ENCODE measurements at regions of chr17 and their contacts with region 1.

Region 1: DNA sequence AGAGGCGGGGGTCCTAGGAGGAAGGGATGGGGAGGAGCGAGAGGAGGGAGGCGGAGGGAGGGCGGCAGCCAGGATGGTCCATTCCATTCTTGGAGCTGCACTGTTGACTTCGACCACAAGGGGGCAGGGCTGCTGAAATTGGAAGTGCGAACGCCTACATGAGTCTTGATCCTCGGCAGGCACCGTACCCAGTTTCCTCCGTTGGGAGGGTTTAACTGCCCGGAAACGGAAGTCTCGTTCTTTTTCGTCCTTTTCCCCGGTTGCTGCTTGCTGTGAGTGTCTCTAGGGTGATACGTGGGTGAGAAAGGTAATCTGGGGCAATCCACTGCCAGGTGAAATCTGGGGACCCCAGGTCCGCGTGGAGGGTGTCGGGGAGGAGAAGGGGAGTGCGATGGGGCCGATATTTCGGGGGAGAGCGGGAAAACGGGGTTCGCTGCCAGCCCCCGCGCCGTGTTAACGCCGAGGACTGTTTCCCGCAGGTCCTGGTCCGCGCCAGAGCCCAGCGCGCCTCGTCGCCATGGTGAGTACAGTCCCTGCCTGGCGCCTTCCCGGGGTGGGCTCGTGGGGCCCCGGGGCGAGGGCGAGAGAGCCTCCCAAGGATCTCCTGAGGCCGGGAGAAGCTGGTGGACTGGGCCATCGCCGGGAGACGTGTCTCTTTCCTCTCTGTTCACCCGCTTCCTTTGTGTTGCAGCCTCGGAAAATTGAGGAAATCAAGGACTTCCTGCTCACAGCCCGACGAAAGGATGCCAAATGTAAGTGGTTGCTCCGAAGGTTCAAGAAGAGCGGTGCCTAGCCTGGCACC is at the start of gene RPL38:
- DNase-seq: peak; percentile 97
- H3K4me3 ChIP-seq: peak within 1 kb of the TSS; percentile 72 to 87 (median 78)
- H3K27ac ChIP-seq: peak within 1 kb of the TSS; percentile 74
- H3K4me1 ChIP-seq: peaks cover 22% of the 10 kb centered on the region
- H3K27me3 ChIP-seq: peaks cover 8 to 14% of the 10 kb centered on the region in 2 experiments
- CTCF ChIP-seq: peak; percentile 97 to 99
- POLR2A ChIP-seq: peak; percentile 98
- total RNA-seq, gene RPL38: 1,006 and 1,060 TPM in 2 replicates

Region 2: GRCh38 chr17:73311781-73312641 is 891.6 kb before region 1 on chr17 and contains the start of gene CDC42EP4:
- CTCF ChIA-PET with region 1: interaction called, 3 read pairs
- POLR2A ChIA-PET with region 1: no interaction called
- dilution Hi-C with region 1: no loop called
- intact Hi-C with region 1: loop called (anchors 5 kb)
- DNase-seq: peak; percentile 95
- H3K4me3 ChIP-seq: peak within 1 kb of the TSS; percentile 82 to 97 (median 88)
- H3K27ac ChIP-seq: peak within 1 kb of the TSS; percentile 80
- H3K4me1 ChIP-seq: peaks cover 27% of the 10 kb centered on the region
- H3K27me3 ChIP-seq: peaks cover 2% of the 10 kb centered on the region in 2 experiments
- CTCF ChIP-seq: no peak
- POLR2A ChIP-seq: peak; percentile 80
- total RNA-seq, gene CDC42EP4: 18.8 and 19.6 TPM in 2 replicates

Region 3: DNA sequence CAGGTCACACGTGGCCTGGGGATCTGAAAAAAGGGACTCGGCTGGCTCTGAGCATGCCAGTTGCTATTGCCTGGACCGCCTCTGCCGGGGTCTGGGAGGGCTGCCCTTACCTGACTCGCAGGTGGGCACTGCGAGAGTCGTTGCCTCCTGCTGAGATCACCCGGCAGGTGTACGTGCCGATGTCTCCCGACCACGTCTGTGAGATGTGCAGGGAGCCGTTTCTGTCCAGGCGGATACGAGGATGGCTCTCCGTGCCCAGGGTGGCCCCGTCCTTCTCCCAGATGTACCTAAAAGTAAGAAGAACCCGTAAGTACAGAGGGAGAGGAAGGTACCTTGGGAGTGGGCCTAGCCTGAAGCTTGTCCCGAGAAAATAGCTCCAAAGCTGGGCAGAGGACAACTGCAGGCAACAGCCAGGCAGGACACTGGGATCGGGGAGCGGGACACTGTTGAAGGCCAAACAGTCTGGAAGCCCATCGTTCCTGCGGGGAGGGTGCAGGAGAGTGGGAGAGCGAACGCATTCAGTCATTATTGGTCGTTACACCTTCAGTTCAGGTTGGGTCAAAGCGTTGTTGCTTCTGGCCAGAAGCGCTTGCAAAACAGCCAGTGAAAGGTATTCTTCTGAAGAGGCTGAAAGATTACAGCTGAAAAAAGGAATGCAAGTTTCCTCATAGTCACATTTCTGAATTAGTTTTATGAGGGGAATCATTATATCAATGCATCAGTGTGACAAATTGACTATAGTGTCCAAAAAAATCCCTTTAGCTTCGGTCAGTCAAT is 779.6 kb before region 1 on chr17:
- CTCF ChIA-PET with region 1: interaction called, 70 read pairs
- POLR2A ChIA-PET with region 1: no interaction called
- dilution Hi-C with region 1: no loop called
- intact Hi-C with region 1: loop called (anchors 1 kb)
- DNase-seq: no peak
- H3K4me3 ChIP-seq: no peak overlapping the region
- H3K27ac ChIP-seq: no peak overlapping the region
- H3K4me1 ChIP-seq: no peaks in the 10 kb centered on the region
- H3K27me3 ChIP-seq: no peaks in the 10 kb centered on the region
- CTCF ChIP-seq: no peak
- POLR2A ChIP-seq: no peak

Region 4: DNA sequence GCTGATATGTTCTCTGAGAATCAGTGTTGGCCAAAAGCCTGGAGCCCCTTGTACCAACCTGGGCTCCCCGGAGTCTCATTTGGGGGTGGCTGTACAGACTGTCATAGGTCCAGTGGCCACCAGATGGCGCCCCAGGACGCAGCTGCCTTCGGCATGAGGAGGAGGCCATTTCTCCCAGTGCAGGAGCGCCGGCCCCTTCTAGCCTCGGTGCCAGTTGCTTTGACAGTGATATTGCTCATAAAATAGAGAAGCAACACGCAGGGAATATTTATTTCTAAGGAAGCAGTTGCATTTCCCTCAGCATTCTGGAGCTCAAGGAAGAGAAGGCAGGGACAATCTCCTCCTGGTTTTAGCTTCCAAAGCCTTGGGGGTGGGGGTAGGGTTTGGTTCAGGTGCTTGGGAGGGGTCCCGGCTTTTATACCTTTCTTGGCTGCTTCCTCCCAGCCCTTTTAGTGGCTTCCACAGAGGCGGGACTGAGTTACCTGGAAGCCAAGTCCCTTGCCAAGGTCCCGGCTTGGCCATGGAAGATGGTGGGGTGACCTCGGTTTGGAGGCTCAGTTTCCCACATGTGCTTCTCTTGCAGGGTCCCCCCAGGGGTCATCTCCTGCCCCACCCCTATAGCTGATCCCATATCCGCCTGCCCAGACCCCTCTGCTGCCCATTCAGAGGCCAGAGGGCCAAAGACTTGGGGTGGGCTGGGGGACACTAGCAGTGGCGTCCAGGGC is 774.0 kb before region 1 on chr17:
- CTCF ChIA-PET with region 1: interaction called, 70 read pairs
- POLR2A ChIA-PET with region 1: no interaction called
- dilution Hi-C with region 1: no loop called
- intact Hi-C with region 1: loop called (anchors 1 kb)
- DNase-seq: peak; percentile 58
- H3K4me3 ChIP-seq: no peak overlapping the region
- H3K27ac ChIP-seq: no peak overlapping the region
- H3K4me1 ChIP-seq: no peaks in the 10 kb centered on the region
- H3K27me3 ChIP-seq: no peaks in the 10 kb centered on the region
- CTCF ChIP-seq: peak; percentile 92 to 94
- POLR2A ChIP-seq: no peak

Region 5: DNA sequence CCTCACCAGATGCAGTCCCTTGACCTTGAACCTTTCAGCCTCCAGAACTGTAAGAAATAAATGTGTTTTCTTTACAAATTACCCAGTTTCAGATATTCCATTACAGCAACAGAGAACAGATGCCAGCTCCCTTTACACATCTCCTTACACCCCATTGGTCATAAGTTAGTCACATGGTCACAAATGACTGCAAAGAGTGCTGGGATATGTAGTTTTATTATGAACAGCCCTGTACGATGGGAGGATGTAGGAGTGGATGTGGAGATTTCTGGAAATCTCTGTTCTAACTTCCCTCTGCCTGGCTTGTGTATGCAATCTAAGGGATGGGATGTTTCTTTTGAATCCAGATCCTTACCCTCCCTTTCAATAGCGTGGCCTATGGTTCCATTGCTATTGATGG is 13.5 kb before region 1 on chr17:
- CTCF ChIA-PET with region 1: interaction called, 35 read pairs
- POLR2A ChIA-PET with region 1: interaction called, 3 read pairs
- dilution Hi-C with region 1: no loop called
- intact Hi-C with region 1: no loop called
- DNase-seq: peak; percentile 61
- H3K4me3 ChIP-seq: no peak overlapping the region
- H3K27ac ChIP-seq: no peak overlapping the region
- H3K4me1 ChIP-seq: no peaks in the 10 kb centered on the region
- H3K27me3 ChIP-seq: no peaks in the 10 kb centered on the region
- CTCF ChIP-seq: no peak
- POLR2A ChIP-seq: no peak